Activated CD8-positive, alpha-beta memory T cell treated with anti-CD3 and anti-CD28 coated beads, Interleukin-2, amount 10 ng/mL, durations not matched to agents 7 days and 5 days (primary cell): ENCODE measurements at regions of chr15 and their contacts with region 1.

Region 1: DNA sequence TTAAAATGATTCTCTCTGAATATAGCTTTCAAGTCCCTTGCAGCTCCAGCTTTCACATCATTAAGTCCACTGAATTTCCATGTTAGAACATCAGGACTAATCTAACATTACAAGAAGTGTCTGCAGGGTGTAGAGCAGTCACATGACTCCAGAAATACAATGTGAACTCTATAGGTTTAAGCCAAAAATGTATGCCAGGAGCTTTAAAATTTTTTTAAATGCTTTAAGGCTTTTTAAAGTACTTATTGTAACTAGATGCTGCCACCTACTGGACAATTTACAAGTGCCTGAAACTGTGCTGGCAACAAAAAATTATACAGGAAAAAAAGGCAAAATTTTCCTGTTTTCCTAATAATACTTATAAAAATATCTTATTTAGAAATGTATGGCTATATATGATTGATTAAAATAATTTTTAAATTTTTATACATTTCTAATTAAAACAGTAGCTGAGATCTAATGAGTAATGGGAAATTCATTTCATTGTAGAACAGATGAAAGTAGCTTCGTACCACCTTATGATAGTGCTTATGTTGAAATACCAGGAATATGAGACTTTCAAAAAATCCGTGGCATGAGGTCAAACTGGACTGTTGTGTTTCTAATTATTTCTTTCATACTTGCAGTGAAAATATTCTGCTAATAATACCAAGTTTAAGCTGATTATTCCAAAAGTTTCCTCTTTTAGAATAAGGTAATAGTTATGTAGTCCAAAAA is 25.7 kb downstream of the FSIP1 start:
- DNase-seq: no peak
- ATAC-seq: no peak
- H3K4me3 Mint-ChIP-seq: no peak overlapping the region
- H3K27ac Mint-ChIP-seq: no peak overlapping the region
- H3K4me1 Mint-ChIP-seq: no peaks in the 10 kb centered on the region
- H3K27me3 Mint-ChIP-seq: peaks cover 32% of the 10 kb centered on the region

Region 2: DNA sequence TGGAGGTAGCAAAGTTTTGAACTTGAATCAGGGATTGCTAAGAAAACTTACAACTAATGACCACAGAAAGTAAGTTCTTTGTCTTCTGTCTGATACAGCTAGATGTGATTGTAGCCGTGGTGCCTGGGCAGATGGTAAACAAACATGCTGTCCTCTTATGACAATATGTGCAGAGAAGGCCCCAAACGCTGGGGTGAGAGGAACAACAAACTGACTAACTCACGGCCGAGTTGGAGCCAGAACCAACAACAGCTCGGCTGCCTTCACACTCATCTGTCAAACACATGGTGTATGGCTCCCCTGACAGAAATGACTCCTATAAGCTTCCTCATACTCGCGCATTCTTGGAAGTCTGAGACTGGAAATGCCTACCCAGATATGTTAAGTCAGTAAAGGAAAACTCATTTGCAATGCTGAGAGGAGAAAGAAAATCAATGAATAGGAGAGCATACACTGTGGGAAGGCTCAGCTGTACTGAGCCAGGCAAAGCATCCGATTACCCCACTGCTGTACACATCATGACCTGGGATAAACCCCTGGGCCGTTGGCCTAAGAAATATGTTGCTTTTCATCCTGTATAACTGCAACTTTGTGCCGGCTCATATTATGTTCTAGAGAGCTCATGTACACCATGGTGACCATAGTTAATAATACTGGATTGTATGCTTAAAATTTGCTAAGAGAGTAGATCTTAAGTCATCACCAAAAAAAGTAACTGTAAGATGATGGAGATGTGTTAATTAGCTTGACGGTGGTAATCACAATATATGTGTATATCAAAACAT is 170.4 kb before region 1 on chr15:
- CTCF ChIA-PET with region 1: interaction called, 85 read pairs
- DNase-seq: no peak
- ATAC-seq: no peak
- H3K4me3 Mint-ChIP-seq: no peak overlapping the region
- H3K27ac Mint-ChIP-seq: no peak overlapping the region
- H3K4me1 Mint-ChIP-seq: peaks cover 10% of the 10 kb centered on the region
- H3K27me3 Mint-ChIP-seq: peaks cover 15% of the 10 kb centered on the region

Region 3: GRCh38 chr15:39624806-39625205 is 132.2 kb before region 1 on chr15:
- CTCF ChIA-PET with region 1: interaction called, 14 read pairs
- DNase-seq: peak; percentile 92
- ATAC-seq: peak; percentile 83
- H3K4me3 Mint-ChIP-seq: peak overlapping the region; percentile 62
- H3K27ac Mint-ChIP-seq: peak overlapping the region; percentile 100
- H3K4me1 Mint-ChIP-seq: peaks cover 80% of the 10 kb centered on the region
- H3K27me3 Mint-ChIP-seq: no peaks in the 10 kb centered on the region

Region 4: GRCh38 chr15:39741258-39741657 is 15.7 kb before region 1 on chr15:
- CTCF ChIA-PET with region 1: interaction called, 11 read pairs
- DNase-seq: no peak
- ATAC-seq: no peak
- H3K4me3 Mint-ChIP-seq: no peak overlapping the region
- H3K27ac Mint-ChIP-seq: no peak overlapping the region
- H3K4me1 Mint-ChIP-seq: peaks cover 3% of the 10 kb centered on the region
- H3K27me3 Mint-ChIP-seq: peaks cover 14% of the 10 kb centered on the region

Region 5: GRCh38 chr15:39782441-39783138 is 25.6 kb after region 1 on chr15 and contains the start of gene FSIP1:
- CTCF ChIA-PET with region 1: interaction called, 11 read pairs
- DNase-seq: peak; percentile 98
- ATAC-seq: peak; percentile 99
- H3K4me3 Mint-ChIP-seq: peak within 1 kb of the TSS; percentile 91
- H3K27ac Mint-ChIP-seq: peak within 1 kb of the TSS; percentile 77
- H3K4me1 Mint-ChIP-seq: peaks cover 48% of the 10 kb centered on the region
- H3K27me3 Mint-ChIP-seq: no peaks in the 10 kb centered on the region
- total RNA-seq, gene FSIP1: 0.50 to 0.56 TPM

Region 6: GRCh38 chr15:39869858-39870515 is 113.0 kb after region 1 on chr15:
- CTCF ChIA-PET with region 1: no interaction called
- DNase-seq: no peak
- ATAC-seq: no peak
- H3K4me3 Mint-ChIP-seq: no peak overlapping the region
- H3K27ac Mint-ChIP-seq: no peak overlapping the region
- H3K4me1 Mint-ChIP-seq: peaks cover 14% of the 10 kb centered on the region
- H3K27me3 Mint-ChIP-seq: peaks cover 21% of the 10 kb centered on the region